ENCODE measurements at regions of chr2 and their contacts with region 1.

Region 1: GRCh38 chr2:19362755-19363473 is 4.5 kb upstream of the OSR1 start:
- DNase-seq: peak; percentile 80
- H3K4me3 Mint-ChIP-seq: peak overlapping the region; percentile 94
- H3K27ac Mint-ChIP-seq: peak overlapping the region; percentile 56
- H3K4me1 Mint-ChIP-seq: peaks cover 21% of the 10 kb centered on the region
- H3K27me3 Mint-ChIP-seq: peaks cover 94% of the 10 kb centered on the region

Region 2: DNA sequence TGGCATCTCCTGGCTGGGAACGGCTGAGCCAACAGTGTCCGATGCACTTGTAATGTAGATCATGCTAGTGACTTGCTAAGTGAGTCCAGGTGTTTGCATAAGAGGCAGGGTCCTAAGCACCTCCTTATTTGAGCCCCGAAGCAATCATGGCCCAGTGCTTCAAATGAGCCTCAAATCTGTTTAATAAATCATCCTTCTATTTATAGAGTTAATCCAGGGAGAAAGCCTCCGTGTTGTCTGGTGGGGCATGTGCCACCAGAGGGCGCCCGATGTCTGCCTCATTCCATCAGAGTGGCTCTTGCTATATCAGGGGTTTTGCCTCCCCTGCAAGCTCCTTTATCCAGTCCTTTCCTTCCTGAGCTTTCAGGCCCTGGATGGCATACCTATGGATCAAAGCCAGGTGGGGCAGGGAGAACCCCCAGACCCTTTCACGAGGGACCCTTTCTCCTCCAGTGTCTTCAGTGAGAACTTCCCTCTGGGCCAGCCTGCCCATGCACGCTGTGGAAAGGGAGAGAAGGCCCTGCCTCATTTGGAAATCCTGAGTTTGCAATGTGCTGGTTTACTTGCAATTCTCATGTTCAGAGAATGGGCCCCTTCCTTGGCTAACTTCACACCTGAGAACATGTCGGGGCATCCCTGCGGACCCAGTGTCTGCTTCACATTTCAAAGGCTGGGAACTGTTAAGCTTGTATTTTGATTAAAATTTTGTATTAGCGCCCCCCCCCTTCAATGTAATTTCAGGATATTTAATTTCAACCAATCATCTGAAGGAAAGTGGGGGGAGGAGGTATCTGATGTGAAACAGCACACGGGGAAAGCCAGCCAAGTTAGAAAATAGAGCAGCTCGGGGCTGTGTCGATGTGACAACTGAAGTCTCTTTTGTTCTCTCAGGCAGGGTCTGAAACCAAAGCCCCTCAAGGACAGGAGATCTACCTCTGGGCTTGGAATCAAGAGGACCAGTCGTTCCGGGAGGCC is 842.2 kb before region 1 on chr2:
- intact Hi-C with region 1: loop called (anchors 5 kb)
- DNase-seq: peak; percentile 90
- H3K4me3 Mint-ChIP-seq: no peak overlapping the region
- H3K27ac Mint-ChIP-seq: no peak overlapping the region
- H3K4me1 Mint-ChIP-seq: no peaks in the 10 kb centered on the region
- H3K27me3 Mint-ChIP-seq: peaks cover 9% of the 10 kb centered on the region

Region 3: GRCh38 chr2:18749912-18750526 is 612.9 kb before region 1 on chr2:
- intact Hi-C with region 1: loop called (anchors 5 kb)
- DNase-seq: peak; percentile 78
- H3K4me3 Mint-ChIP-seq: no peak overlapping the region
- H3K27ac Mint-ChIP-seq: no peak overlapping the region
- H3K4me1 Mint-ChIP-seq: no peaks in the 10 kb centered on the region
- H3K27me3 Mint-ChIP-seq: no peaks in the 10 kb centered on the region

Region 4: DNA sequence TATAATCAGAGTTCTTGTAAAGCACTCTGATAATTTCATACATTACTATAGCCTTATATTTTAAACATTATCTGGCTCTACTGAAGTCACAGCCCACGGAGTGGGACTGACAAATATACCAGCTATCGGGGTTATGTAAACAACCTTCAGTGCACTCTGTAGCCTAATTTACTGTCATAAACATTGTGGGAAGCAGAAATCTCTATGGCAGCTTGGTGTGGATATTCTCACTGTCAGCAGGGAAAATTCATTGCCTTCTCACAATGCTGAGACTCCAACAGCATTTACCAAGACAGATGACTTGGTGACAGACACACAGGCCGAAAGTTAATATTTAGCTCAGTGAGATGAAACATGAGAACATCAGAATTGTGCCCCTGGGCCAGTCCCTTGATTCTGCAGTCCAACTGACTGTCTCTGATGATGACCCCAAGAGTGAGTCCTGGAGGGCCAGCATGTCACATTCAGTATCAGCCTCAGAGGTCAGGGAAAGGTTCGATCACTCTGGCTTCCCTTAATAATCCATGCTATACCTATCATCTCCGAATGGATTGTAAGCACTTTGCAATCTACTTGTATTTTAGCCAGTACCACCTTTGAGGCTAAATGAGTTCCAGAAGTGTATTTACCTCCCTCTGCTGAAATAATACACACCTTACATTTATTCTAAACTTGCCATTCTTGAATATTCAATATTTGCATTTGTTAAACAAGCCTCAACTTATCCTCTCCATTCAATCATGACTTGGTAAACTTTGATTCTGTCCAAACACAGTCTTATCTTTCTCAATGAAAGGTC is 141.7 kb after region 1 on chr2:
- intact Hi-C with region 1: no loop called
- DNase-seq: no peak
- H3K4me3 Mint-ChIP-seq: no peak overlapping the region
- H3K27ac Mint-ChIP-seq: no peak overlapping the region
- H3K4me1 Mint-ChIP-seq: no peaks in the 10 kb centered on the region
- H3K27me3 Mint-ChIP-seq: peaks cover 4% of the 10 kb centered on the region